Naive thymus-derived CD8-positive, alpha-beta T cell (primary cell): ENCODE measurements at regions of chr3 and their contacts with region 1.

Region 1: DNA sequence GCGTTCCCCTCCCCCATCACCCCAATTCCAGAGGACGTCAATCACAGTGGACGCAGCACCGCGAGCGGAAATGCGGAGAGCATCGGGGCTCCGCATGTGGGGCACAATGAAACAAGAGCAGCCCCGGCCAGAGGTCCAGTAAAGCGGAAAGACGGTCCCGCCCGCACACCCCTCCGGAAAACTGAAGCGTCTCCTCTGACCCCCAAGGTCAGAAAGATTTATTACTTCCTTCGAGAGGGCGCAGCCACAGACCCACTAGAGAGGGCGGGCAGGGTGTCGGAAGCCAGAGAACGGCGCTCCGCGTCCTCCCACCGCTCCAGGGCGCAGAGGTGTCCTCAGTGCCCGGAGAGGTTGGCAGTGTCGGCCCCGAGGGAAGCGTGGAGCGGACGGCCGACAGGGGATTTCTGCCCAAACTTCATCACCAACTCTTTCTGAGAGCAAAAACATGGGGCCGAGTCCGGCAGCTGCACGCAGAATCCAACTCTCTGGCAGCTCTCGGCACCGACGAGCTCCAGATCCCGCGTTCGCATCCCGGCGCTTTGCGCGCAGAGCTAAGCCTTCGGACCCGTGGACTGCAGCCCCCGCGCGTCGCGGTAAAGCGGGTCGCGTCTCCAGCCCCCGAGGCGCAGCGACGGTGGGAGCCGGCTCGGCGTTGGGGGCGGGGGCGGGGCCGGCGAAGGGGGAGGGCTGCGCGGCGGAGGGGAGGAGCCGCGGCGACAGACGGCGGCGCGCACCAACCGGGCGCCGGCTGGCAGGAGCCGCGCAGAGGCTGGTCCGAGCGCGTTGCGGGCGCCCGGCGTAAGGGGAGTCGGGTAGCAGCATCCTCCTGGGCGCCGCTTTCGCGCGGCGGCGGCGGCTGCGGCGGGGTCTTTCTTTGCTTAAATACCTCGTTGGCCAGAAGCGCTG is at the start of gene CHST2:
- DNase-seq: peak; percentile 56 to 82 (median 71)
- ATAC-seq: peak; percentile 74 to 78
- H3K4me3 Mint-ChIP-seq: peak within 1 kb of the TSS; percentile 87 to 95 (median 93)
- H3K27ac Mint-ChIP-seq: peak within 1 kb of the TSS; percentile 77 to 91 (median 86)
- H3K4me1 Mint-ChIP-seq: peaks cover 10 to 39% (median 31%) of the 10 kb centered on the region in 4 donors
- H3K27me3 Mint-ChIP-seq: no peaks in the 10 kb centered on the region
- polyA plus RNA-seq, gene CHST2: 4.2 to 11.4 (median 5.5) TPM

Region 2: DNA sequence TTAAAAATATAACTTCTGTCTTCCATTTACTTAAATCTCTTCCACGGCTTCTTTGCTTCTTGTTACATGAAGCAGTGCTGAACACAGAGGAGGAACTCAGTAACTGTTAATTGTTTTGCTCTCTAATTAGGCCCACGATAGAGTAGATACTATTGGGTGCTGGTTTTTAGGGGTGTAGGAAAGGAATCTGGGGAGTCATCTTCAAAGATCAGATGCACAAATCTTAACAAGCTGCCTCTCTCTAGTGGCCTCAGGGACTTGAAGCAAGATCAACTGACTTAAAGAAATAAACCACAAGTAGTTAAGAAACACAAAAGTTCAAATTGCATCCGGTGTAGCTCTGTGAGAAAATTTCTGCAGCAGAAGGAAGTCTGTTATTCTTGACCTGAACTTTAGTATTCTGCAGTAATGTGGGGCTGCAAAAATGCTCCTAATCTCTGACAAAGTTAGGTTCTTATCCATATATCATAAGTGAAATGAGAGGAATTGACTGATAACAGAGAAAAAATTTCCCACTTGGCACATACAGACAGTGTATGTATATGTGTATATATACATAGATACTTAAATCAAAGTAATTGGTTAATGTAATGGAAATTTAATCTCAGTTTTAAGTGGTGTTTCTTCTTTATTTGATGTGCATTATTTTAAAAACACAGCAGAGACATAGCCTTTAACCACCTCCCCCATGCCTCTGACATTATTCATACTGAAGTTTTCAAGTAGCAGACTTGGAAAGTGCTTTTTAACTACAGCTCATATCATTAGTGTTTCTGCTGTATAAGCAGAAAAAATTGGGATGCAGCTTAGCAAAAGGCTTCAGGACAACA is 52.1 kb after region 1 on chr3:
- POLR2A ChIA-PET with region 1: interaction called, 18 read pairs
- DNase-seq: peak in 5 of 10 donors; percentile 13 to 62 (median 51)
- ATAC-seq: peak; percentile 70 to 78
- H3K4me3 Mint-ChIP-seq: peak overlapping the region; percentile 57 to 83 (median 75)
- H3K27ac Mint-ChIP-seq: peak overlapping the region; percentile 85 to 97 (median 89)
- H3K4me1 Mint-ChIP-seq: peaks cover 47 to 87% (median 81%) of the 10 kb centered on the region in 4 donors
- H3K27me3 Mint-ChIP-seq: no peaks in the 10 kb centered on the region

Region 3: GRCh38 chr3:143751643-143752178 is 632.4 kb after region 1 on chr3:
- POLR2A ChIA-PET with region 1: interaction called, 11 read pairs
- DNase-seq: peak in 8 of 10 donors; percentile 13 to 80 (median 56)
- ATAC-seq: peak; percentile 81 to 84
- H3K4me3 Mint-ChIP-seq: peak overlapping the region; percentile 49 to 92 (median 69)
- H3K27ac Mint-ChIP-seq: peak overlapping the region; percentile 91 to 99 (median 96)
- H3K4me1 Mint-ChIP-seq: peaks cover 26 to 52% (median 41%) of the 10 kb centered on the region in 4 donors
- H3K27me3 Mint-ChIP-seq: no peaks in the 10 kb centered on the region